ENCODE measurements at regions of chr5 and their contacts with region 1.

Region 1: GRCh38 chr5:150263801-150264621 is 25.6 kb downstream of the CAMK2A start:
- DNase-seq: peak; percentile 78 to 87
- H3K4me3 ChIP-seq: no peak overlapping the region
- H3K27ac ChIP-seq: peak overlapping the region; percentile 25; the same call in 1 of the 2 replicates
- H3K4me1 ChIP-seq: peaks cover 38% of the 10 kb centered on the region
- H3K27me3 ChIP-seq: no peaks in the 10 kb centered on the region
- CTCF ChIP-seq: no peak

Region 2: DNA sequence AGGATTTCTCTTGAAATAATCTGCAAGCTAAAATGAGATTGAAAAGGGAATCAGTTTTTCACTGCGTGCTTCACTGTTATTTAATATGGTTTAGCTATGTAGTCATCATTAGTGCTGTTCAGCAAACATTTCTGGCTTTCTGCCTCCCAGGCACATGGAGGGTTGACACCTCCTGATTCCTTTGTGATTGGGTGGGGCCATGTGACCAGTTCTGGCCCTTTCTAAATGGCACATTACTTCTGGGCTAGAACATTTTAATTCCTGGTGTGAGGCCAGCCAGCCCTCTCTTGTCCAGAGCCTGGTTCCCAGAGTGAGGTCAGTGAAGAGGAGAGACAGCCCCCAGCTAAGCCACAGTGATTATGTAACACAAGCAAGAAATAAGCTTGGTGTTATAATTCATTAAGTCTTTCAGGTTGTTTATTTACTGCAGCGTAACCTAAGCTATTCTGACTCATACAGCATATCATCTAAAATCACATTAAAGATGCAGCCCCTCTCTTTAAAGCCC is 56.1 kb after region 1 on chr5:
- CTCF ChIA-PET with region 1: no interaction called
- POLR2A ChIA-PET with region 1: no interaction called
- intact Hi-C with region 1: loop called (anchors 5 kb)
- DNase-seq: peak; percentile 89 to 99
- H3K4me3 ChIP-seq: no peak overlapping the region
- H3K27ac ChIP-seq: peak overlapping the region; percentile 81
- H3K4me1 ChIP-seq: peaks cover 70% of the 10 kb centered on the region
- H3K27me3 ChIP-seq: no peaks in the 10 kb centered on the region
- CTCF ChIP-seq: no peak

Region 3: DNA sequence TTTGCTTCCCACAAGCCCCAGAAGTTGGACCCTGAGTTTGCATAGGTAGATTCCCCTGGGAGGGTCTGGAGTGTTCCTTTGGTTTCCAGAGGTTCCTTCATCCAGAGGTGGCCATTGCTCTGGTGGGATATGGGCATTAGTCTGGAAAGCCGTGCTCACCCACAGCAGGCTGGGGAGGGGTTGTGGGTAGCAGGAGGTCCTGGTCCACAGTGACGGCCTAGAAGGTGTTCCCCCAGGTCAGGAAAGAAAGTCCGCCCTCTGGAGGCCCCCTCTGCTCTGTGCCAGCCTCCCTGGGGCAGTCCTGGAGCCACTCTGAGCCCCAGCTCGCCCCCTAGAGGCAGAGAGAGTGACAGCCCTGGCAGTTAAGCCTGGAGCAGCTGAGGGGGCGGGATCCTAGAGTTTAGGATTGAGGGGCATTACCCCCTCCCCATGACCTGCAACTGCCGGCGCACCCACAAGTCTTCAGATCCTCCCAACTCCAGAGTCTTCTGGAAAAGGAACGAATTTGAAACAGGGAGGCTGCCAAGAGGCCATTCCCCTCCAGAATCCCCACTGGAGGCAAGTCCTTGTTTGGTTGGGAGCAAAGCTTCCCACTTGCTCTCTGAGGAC is 280.7 kb after region 1 on chr5:
- CTCF ChIA-PET with region 1: interaction called, 24 read pairs
- POLR2A ChIA-PET with region 1: no interaction called
- intact Hi-C with region 1: no loop called
- DNase-seq: peak in 1 of 2 experiments; percentile 63
- H3K4me3 ChIP-seq: no peak overlapping the region
- H3K27ac ChIP-seq: no peak overlapping the region
- H3K4me1 ChIP-seq: no peaks in the 10 kb centered on the region
- H3K27me3 ChIP-seq: no peaks in the 10 kb centered on the region
- CTCF ChIP-seq: peak; percentile 87